ENCODE measurements at regions of chr12 and their contacts with region 1.

Region 1: DNA sequence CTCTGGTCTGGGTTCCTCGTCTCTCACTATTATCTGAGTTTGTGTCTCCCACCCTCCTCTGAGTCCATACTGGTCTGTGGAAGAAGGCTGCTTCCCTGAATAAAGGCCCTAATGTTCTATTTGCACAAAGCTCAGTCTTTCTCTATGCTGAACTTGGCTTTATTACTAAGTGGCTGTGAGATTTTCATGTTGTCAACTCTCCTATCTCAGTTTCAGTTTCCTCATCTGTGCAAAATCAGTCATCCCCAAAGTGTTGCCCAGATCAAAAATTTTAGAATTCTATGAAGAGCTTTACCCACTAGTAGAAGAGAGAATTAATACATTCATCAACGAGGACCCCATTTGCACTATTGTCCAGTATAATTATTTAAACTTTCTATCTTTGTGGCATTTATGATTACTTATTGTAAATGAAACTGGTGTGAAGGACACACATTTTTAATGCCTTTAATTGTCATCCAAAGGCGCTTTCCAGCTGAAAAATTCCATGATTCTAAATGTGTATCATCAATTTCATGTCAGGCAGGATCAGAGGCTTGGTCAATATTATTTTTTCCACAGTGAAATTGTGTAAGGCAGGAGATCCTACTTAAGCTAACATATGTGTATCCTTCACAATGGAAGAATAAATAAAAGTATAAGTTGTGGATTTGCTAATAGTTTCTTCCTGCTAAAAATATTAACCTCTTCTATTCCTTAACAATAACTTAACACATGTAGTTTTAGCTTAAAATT is 79.1 kb upstream of the EEA1 start:
- DNase-seq: no peak
- ATAC-seq: peak; percentile 79
- H3K4me3 Mint-ChIP-seq: no peak overlapping the region
- H3K27ac Mint-ChIP-seq: no peak overlapping the region
- H3K4me1 Mint-ChIP-seq: peaks cover 9% of the 10 kb centered on the region
- H3K27me3 Mint-ChIP-seq: peaks cover 2% of the 10 kb centered on the region

Region 2: GRCh38 chr12:92995258-92995903 is 12.8 kb before region 1 on chr12:
- CTCF ChIA-PET with region 1: interaction called, 5 read pairs
- POLR2A ChIA-PET with region 1: no interaction called
- intact Hi-C with region 1: loop called in 1 of 2 experiments (anchors 2 kb)
- DNase-seq: no peak
- ATAC-seq: no peak
- H3K4me3 Mint-ChIP-seq: no peak overlapping the region
- H3K27ac Mint-ChIP-seq: no peak overlapping the region
- H3K4me1 Mint-ChIP-seq: peaks cover 6% of the 10 kb centered on the region
- H3K27me3 Mint-ChIP-seq: no peaks in the 10 kb centered on the region

Measured in activated CD4-positive, alpha-beta T cell treated with anti-CD3 and anti-CD28 coated beads for 36 hours (primary cell).